ENCODE measurements at regions of chr11 and their contacts with region 1.

Region 1: GRCh38 chr11:2036863-2037486 is 39.3 kb upstream of the H19 start:
- DNase-seq: no peak
- ATAC-seq: peak; percentile 75
- H3K4me3 Mint-ChIP-seq: no peak overlapping the region
- H3K27ac Mint-ChIP-seq: no peak overlapping the region
- H3K4me1 Mint-ChIP-seq: no peaks in the 10 kb centered on the region
- H3K27me3 Mint-ChIP-seq: no peaks in the 10 kb centered on the region

Region 2: DNA sequence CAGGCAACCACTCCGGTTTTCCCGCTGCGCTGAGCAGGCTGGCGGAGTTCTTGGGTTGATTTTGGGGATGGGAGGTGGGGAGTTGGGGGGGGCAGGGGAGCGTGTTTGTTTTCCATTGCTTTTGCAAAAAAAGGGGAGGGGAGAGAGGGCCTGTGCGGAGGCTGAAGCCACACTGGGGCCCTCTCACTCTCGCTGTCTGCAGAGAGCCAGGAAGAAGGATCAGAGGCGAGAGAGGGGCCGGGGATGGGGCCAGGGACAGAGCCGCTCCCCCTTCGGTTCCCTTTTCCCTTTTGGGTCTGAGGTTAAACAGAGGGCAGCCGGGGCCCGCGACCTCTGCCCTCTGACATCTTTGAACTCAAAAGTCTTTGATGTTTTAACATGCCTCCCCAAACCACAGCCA is 21.9 kb before region 1 on chr11:
- CTCF ChIA-PET with region 1: no interaction called
- POLR2A ChIA-PET with region 1: no interaction called
- intact Hi-C with region 1: no loop called
- DNase-seq: no peak
- ATAC-seq: no peak
- H3K4me3 Mint-ChIP-seq: no peak overlapping the region
- H3K27ac Mint-ChIP-seq: no peak overlapping the region
- H3K4me1 Mint-ChIP-seq: no peaks in the 10 kb centered on the region
- H3K27me3 Mint-ChIP-seq: no peaks in the 10 kb centered on the region

Region 3: DNA sequence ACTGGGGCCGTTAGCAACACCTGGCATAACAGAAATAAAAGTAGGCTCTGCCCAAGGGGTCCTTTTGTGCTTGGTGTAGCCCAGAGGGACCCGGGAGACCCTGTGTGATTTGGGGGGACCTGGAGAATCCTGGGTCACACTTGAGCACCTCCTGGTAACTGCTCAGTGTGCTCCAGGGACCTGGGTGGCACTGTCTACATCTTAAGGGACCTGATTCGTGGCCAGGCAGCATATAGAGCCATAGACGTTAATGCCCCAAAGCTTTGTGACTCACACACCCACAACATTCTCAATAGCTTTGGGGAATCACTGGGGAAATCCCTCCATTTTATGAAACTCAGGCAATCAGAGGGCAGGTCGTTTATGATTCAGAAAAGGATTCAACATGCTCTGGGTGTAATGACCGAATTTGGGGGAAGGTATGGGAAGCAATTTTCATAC is 105.8 kb after region 1 on chr11:
- CTCF ChIA-PET with region 1: interaction called, 311 read pairs
- POLR2A ChIA-PET with region 1: no interaction called
- intact Hi-C with region 1: no loop called
- DNase-seq: peak; percentile 71
- ATAC-seq: peak; percentile 96
- H3K4me3 Mint-ChIP-seq: peak overlapping the region; percentile 55
- H3K27ac Mint-ChIP-seq: no peak overlapping the region
- H3K4me1 Mint-ChIP-seq: peaks cover 31% of the 10 kb centered on the region
- H3K27me3 Mint-ChIP-seq: peaks cover 58% of the 10 kb centered on the region

Measured in activated CD4-positive, alpha-beta T cell treated with anti-CD3 and anti-CD28 coated beads for 36 hours (primary cell).